OCI-LY7 (cell line): ENCODE measurements at regions of chr2 and their contacts with region 1.

Region 1: DNA sequence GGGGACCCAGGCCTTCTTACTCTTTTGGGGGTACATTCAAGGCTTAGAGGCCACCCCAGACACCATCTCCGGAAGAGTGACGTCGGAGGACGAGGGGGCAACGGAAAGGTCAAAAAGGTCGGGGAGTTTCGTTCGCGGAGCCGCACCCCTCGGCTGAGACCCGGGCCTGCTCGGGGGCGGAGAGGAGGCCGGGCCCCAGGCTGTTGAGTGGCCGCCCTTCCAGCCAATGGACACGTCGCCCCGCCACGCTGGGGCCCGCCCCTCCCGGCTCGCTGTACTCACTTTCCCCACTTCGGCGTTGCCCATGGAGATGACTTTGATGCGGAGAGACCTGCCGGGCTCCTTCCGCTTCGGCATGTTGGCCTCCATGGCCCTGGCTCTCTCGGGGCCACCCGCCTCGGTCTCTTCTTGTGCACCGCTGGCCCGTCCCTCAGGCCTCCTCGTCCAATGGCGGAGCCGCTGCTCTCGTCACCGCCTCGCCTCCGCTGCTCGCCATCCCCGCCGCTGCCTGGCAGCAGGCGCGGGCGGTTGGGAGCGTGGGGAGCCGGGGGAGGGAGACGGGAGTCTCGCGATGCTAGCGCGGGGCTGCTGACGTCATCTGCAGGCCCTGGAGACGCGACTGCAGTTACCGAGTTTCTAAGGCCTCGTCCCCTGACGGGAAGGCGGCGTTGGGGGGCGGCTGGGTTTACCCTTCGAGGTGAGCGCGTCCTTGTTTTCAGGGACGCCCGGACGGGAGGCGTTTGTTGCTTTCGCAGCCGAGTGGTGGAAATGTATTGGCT is at the start of gene DNAJC27:
- DNase-seq: peak; percentile 97
- H3K4me3 ChIP-seq: peak within 1 kb of the TSS; percentile 93
- H3K27ac ChIP-seq: peak within 1 kb of the TSS; percentile 81
- H3K4me1 ChIP-seq: peaks cover 11% of the 10 kb centered on the region
- CTCF ChIP-seq: no peak
- total RNA-seq, gene DNAJC27: 3.6 and 13.5 TPM in 2 replicates

Region 2: GRCh38 chr2:24792874-24793760 is 178.6 kb before region 1 on chr2 and contains the starts of genes CENPO and PTRHD1:
- CTCF ChIA-PET with region 1: no interaction called
- POLR2A ChIA-PET with region 1: interaction called, 3 read pairs
- intact Hi-C with region 1: loop called (anchors 2 kb)
- DNase-seq: peak; percentile 97
- H3K4me3 ChIP-seq: peak within 1 kb of the TSS; percentile 91
- H3K27ac ChIP-seq: peak within 1 kb of the TSS; percentile 82
- H3K4me1 ChIP-seq: peaks cover 30% of the 10 kb centered on the region
- CTCF ChIP-seq: peak; percentile 54
- total RNA-seq, gene CENPO: 52.4 and 53.6 TPM in 2 replicates
- total RNA-seq, gene PTRHD1: 44.8 and 55.0 TPM in 2 replicates

Region 3: GRCh38 chr2:24920098-24920808 is 51.5 kb before region 1 on chr2 and contains the start of gene ADCY3:
- CTCF ChIA-PET with region 1: no interaction called
- POLR2A ChIA-PET with region 1: no interaction called
- intact Hi-C with region 1: loop called (anchors 5 kb)
- DNase-seq: peak; percentile 75
- H3K4me3 ChIP-seq: peak within 1 kb of the TSS; percentile 78
- H3K27ac ChIP-seq: peak within 1 kb of the TSS; percentile 34
- H3K4me1 ChIP-seq: peaks cover 32% of the 10 kb centered on the region
- CTCF ChIP-seq: no peak
- total RNA-seq, gene ADCY3: 34.1 and 45.8 TPM in 2 replicates

Region 4: DNA sequence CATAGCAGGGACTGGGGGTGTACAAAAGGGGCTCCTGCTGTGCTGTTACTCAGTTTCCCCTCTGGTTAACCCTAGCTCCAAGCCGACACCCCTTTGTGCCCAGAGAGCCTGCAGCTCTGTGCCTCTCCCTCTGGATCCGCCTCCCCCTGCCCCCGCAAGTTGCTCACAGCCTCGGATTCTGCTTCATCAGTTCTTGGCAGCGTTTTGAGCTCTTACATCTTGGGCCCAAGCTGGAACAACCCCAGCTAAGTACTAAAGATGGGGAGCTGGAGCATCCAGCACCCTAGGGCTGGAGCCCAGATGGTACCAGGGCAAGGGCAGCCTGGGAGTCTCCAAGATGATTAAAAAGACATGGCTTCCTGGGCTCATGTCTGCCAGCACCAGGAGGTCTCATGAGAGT is 155.9 kb after region 1 on chr2:
- CTCF ChIA-PET with region 1: interaction called, 7 read pairs
- POLR2A ChIA-PET with region 1: no interaction called
- intact Hi-C with region 1: loop called (anchors 1 kb)
- DNase-seq: no peak
- H3K4me3 ChIP-seq: no peak overlapping the region
- H3K27ac ChIP-seq: no peak overlapping the region
- H3K4me1 ChIP-seq: peaks cover 3% of the 10 kb centered on the region
- CTCF ChIP-seq: no peak

Region 5: GRCh38 chr2:25201265-25201664 is 229.5 kb after region 1 on chr2:
- CTCF ChIA-PET with region 1: interaction called, 3 read pairs
- POLR2A ChIA-PET with region 1: no interaction called
- intact Hi-C with region 1: loop called (anchors 5 kb)
- DNase-seq: no peak
- H3K4me3 ChIP-seq: no peak overlapping the region
- H3K27ac ChIP-seq: no peak overlapping the region
- H3K4me1 ChIP-seq: no peaks in the 10 kb centered on the region
- CTCF ChIP-seq: peak; percentile 50